GM10248 (cell line): ENCODE measurements at regions of chr5 and their contacts with region 1.

Region 1: GRCh38 chr5:119328753-119329602 is 26.8 kb upstream of the TNFAIP8 start:
- DNase-seq: no peak
- CTCF ChIP-seq: no peak

Region 2: GRCh38 chr5:119347991-119348390 is 19.0 kb after region 1 on chr5:
- CTCF ChIA-PET with region 1: interaction called, 24 read pairs
- POLR2A ChIA-PET with region 1: no interaction called
- DNase-seq: no peak
- CTCF ChIP-seq: no peak